ENCODE measurements at regions of chr11 and their contacts with region 1.

Region 1: GRCh38 chr11:12680246-12680939 is 6.2 kb downstream of the TEAD1 start:
- DNase-seq: peak; percentile 87
- ATAC-seq: peak; percentile 90

Region 2: DNA sequence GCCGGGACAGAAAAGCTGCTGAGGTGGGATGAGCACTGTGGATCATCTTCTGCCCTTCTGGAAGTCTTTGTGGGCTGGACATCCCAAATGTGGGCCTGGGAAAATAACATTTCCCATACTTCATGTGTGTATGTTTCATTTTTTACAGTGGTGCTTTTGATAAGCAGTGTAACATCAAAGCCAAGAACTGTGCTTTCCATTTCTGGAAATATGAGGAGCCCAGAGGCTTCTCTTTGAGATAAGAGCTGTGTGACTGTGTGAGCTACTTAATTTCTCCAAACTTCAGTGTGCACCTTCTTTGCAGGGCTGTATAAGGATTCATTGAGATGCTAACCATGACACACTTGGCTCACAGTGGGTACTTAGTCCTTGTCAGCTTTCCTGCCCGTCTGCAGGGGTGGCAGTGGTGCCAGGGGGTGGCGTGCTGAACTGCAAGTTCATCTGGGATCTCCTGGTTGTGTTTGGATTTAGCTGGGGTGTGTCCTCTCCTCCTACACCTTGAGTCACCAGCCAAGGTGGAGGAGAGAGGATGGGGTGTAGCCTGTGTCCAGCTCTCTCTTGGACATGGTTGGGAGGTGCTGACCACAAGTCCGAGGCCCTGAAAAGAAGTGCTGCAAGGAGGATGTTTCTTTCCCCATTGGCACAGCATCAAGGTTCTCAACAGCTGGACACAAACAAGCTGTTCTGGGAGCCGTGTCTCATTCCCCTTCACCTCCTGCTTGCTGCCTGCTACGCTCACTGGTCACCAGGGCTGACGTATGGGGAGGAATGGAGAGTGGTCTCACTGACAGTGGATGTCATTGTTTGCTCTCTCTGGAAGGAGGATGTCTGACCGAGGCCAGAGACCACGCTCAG is 133.2 kb after region 1 on chr11:
- intact Hi-C with region 1: loop called (anchors 10 kb)
- DNase-seq: no peak
- ATAC-seq: peak; percentile 58